ENCODE measurements at regions of chr10 and their contacts with region 1.

Region 1: DNA sequence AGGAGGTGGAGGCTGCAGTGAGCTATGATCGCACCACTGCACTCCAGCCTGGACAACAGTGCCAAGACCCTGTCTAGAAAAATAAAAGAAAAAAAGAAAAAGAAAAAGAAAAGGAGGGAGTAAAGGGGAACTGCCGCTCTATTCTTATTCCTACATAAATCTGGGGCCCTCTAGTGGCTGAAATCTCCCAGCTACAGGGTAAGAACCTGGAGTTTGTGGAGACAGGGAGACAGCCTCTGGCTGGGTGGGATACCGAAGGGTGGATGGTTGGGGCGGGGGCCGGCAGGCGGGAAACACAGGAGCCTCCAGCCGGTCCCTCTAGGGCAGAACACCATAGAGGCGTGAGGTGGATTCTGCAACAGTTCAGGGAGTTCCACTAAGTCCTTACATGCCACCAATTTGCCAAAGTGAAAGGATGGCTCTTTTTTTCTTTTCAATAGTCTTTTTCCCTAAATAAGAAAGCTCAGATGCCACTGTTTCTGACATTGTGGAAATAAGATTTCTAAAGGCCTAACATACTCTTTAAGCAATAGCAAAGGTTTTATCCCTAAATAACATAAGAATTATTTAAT is 117.3 kb downstream of the SVIL start:
- DNase-seq: peak; percentile 82
- ATAC-seq: peak; percentile 98
- H3K4me3 Mint-ChIP-seq: no peak overlapping the region
- H3K27ac Mint-ChIP-seq: no peak overlapping the region
- H3K4me1 Mint-ChIP-seq: peaks cover 14% of the 10 kb centered on the region
- H3K27me3 Mint-ChIP-seq: no peaks in the 10 kb centered on the region
- CTCF ChIP-seq: peak; percentile 44; the same call in 1 of the 2 replicates

Region 2: DNA sequence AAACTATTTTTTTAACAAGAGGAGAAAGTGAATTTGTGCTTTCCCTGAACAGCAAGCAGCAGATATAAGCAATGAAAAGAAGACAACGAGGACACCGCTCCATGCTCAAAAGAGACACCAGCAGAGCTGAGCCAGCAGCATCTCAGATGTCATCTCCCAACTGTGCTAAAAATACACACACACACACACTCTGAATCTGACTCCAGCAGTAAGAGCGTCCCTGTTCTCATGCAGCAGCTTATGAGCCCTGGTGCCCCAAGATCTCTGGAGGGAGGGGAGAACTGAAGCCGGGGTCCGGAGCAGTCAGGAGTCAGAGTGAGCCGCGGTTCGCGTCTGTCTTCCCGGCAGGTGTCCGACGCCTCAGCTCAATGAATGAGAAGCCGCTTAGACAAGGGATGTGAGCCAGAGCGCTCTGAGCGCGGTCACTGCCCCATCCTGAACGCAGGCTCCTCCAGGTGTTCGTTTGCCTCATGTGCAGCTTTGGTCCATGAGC is 68.1 kb after region 1 on chr10:
- CTCF ChIA-PET with region 1: interaction called, 18 read pairs
- POLR2A ChIA-PET with region 1: no interaction called
- DNase-seq: peak; percentile 72
- ATAC-seq: peak; percentile 78
- H3K4me3 Mint-ChIP-seq: peak overlapping the region; percentile 11; the same call in 1 of the 2 replicates
- H3K27ac Mint-ChIP-seq: peak overlapping the region; percentile 73
- H3K4me1 Mint-ChIP-seq: peaks cover 56% of the 10 kb centered on the region
- H3K27me3 Mint-ChIP-seq: peaks cover 3% of the 10 kb centered on the region; the same call in 1 of the 2 replicates
- CTCF ChIP-seq: no peak

Region 3: GRCh38 chr10:29725133-29725720 is 207.8 kb after region 1 on chr10:
- CTCF ChIA-PET with region 1: no interaction called
- POLR2A ChIA-PET with region 1: no interaction called
- DNase-seq: no peak
- ATAC-seq: no peak
- H3K4me3 Mint-ChIP-seq: no peak overlapping the region
- H3K27ac Mint-ChIP-seq: no peak overlapping the region
- H3K4me1 Mint-ChIP-seq: peaks cover 32% of the 10 kb centered on the region
- H3K27me3 Mint-ChIP-seq: peaks cover 2% of the 10 kb centered on the region; the same call in 1 of the 2 replicates
- CTCF ChIP-seq: no peak